ENCODE measurements at regions of chr11 and their contacts with region 1.

Region 1: DNA sequence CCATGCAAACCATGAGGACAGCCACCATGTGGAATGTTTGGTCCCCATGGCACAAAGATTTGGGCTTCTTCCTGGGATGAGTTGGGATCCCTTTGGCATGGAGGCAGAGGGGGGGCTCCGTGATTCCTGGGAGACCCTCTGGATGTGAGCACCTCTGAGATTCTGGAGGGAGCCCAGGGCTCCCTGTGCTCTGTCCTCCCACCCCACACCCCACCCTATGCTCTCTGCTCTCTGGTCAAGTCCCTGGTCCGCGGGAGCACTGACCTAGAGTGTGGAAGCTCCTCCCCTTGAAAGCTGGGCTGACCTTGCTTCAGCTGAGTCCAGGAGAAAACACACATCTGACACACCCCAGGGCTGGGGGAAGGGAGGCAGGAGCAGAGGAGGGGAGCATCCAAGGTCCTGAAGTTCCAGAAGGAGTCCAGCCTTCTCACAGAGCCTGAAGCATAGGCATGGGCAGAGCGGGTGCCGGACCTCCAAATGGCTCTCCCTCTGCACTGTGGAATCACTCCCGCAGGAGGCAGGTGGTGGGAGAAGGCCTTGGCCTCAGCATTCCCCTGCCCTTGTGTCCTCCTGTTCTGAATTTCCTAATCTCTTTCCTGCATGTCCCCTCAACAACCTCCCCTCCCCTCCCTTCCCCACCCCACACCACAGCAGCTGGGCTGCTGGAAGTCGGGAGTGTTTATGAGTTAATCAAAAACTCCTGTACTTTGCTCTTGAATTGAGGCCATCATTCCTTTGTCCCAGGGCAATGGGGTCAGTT is 25.7 kb upstream of the OAF start:
- DNase-seq: peak; percentile 83 to 90 (median 88)
- H3K4me3 ChIP-seq: no peak overlapping the region
- H3K27ac ChIP-seq: peak overlapping the region; percentile 26 to 82
- H3K4me1 ChIP-seq: peaks cover 47% of the 10 kb centered on the region
- H3K27me3 ChIP-seq: no peaks in the 10 kb centered on the region
- CTCF ChIP-seq: no peak
- EP300 ChIP-seq: no peak
- POLR2A ChIP-seq: peak; percentile 45

Region 2: DNA sequence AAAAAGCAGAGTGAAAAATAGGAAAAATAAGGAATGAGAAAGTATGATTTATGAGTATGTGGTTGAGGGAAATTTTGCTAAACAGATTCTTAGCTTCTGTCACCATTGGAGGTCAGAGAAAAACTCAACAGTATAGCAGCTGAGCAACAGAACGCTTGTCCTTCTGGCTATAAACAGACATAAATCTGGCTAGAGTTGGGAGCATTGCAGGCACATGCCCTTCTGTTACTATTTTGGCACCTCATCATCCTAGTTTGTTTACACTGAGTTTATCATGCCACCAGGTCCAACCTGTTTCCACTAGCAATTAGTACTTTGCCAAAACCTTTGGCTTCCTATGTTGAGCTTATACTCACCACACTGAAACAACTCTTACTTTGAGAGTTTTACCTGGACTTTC is 1818.8 kb before region 1 on chr11:
- intact Hi-C with region 1: no loop called
- DNase-seq: no peak
- H3K4me3 ChIP-seq: no peak overlapping the region
- H3K27ac ChIP-seq: no peak overlapping the region
- H3K4me1 ChIP-seq: peaks cover 1% of the 10 kb centered on the region
- H3K27me3 ChIP-seq: no peaks in the 10 kb centered on the region
- CTCF ChIP-seq: no peak
- EP300 ChIP-seq: no peak
- POLR2A ChIP-seq: no peak

Region 3: GRCh38 chr11:119832202-119832935 is 352.8 kb before region 1 on chr11:
- intact Hi-C with region 1: no loop called
- DNase-seq: peak; percentile 45 to 78 (median 66)
- H3K4me3 ChIP-seq: no peak overlapping the region
- H3K27ac ChIP-seq: peak overlapping the region in 1 of 2 donors; percentile 13
- H3K4me1 ChIP-seq: peaks cover 9% of the 10 kb centered on the region
- H3K27me3 ChIP-seq: no peaks in the 10 kb centered on the region
- CTCF ChIP-seq: no peak
- EP300 ChIP-seq: no peak
- POLR2A ChIP-seq: no peak

Region 4: DNA sequence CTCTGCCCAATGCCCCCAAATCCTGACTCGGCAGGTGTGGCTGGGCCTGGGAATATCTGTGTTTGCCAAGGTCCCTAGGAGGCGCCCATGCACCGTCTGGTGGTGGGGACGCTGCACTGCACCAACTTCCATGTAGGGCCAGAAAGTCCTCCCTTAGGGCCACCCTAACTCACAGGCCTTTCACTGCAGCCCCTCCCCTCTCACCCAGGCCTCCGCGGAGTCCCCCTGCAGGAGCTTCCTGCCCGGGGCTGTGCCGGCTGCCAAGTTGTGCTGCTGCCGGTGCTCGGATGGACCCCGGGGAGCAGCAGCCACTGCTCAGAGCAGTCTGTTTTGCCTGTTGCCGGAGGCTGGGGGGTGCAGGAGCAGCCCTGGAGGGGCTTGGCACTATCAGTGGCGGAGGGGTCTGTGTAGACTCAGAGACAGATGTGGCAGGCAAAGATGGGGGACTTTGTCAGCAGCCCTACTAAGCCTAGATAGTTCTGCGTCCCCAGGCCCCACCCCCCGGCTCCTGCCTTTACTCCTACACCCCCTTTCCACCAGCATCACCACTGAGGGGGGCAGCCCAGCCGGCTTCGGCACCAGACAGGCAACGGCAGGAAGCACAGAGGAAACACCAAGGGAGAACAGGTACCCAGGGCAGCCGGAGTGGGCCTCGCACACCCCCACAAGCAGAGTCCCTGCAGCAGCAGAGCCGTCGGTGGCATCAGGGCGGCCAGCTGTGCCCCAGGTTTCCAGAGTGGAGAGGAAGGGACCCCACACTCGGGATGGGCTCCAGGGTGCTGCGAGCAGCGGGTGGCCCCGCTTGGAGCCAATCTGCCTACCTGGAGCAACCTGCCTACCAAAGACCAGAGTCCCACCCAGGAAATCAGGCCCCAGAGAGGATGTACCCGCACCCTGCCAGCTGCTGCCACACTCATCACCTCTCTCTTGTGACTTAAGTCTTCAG is 171.5 kb before region 1 on chr11:
- intact Hi-C with region 1: no loop called
- DNase-seq: peak in 1 of 5 donors; percentile 46
- H3K4me3 ChIP-seq: no peak overlapping the region
- H3K27ac ChIP-seq: no peak overlapping the region
- H3K4me1 ChIP-seq: no peaks in the 10 kb centered on the region
- H3K27me3 ChIP-seq: no peaks in the 10 kb centered on the region
- CTCF ChIP-seq: no peak
- EP300 ChIP-seq: no peak
- POLR2A ChIP-seq: no peak

Region 5: GRCh38 chr11:120210626-120211521 is 25.7 kb after region 1 on chr11 and contains the start of gene OAF:
- intact Hi-C with region 1: loop called in 1 of 4 experiments (anchors 2 kb)
- DNase-seq: peak; percentile 76 to 81 (median 78)
- H3K4me3 ChIP-seq: peak within 1 kb of the TSS; percentile 63
- H3K27ac ChIP-seq: peak within 1 kb of the TSS; percentile 42 to 89
- H3K4me1 ChIP-seq: peaks cover 18% of the 10 kb centered on the region
- H3K27me3 ChIP-seq: no peaks in the 10 kb centered on the region
- CTCF ChIP-seq: peak in 2 of 3 donors; percentile 33 to 68
- EP300 ChIP-seq: no peak
- POLR2A ChIP-seq: peak; percentile 24
- total RNA-seq, gene OAF: 26.6 to 170 (median 66.5) TPM

Measured in ovary (tissue), 10 donors.